Heart right ventricle (tissue), 16 donors: ENCODE measurements at regions of chr12 and their contacts with region 1.

Region 1: DNA sequence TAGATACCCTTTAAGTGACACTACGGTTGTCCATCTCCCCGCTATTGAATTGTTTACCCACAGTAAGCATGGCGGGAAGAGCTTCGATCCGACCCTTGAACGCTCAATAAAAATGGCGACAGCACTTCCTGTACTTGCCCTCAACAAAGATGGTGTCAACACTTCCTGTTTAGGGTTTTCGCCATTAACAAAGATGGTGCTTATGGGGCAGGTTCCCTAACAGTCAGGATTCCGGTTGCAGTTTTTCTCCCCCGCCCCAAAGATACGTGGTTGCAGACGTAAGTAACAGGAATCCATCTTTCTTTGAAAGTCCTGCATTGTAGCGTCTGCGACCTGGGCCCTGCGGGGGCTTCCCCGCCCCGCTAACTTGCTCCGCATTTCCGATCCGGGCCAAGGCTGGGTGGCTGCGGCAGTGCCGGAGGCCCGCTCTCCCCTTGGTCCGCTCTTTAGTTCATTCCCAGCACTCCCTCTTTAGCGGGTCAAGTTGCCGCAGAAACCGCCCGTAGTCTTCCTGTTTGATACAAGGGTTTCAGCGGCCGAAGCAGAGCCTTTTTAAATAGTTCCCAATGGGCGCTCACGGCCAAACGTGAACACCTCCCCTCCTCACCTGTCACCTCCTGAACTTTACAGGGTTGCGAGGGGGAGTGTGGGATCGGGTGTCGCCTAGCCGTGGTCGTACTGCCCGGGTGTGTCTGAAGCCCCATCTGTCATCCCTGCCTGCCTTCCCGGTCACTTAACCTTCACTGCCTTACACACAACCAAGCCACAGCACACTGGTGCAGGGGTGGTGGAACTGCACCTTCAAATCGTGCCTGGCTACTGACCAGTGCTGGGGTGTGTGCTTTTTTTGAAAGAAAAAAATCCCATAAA is at the start of gene CRADD:
- DNase-seq: peak; percentile 67 to 93
- ATAC-seq: peak; percentile 91 to 97 (median 94)
- H3K4me3 ChIP-seq: peak within 1 kb of the TSS; percentile 48 to 80 (median 66)
- H3K27ac ChIP-seq: peak within 1 kb of the TSS; percentile 86 to 99 (median 98)
- H3K4me1 ChIP-seq: peaks cover 0 to 51% (median 27%) of the 10 kb centered on the region in 9 donors
- H3K27me3 ChIP-seq: no peaks in the 10 kb centered on the region
- CTCF ChIP-seq: no peak
- total RNA-seq, gene CRADD: 36.3 to 80.1 (median 60.2) TPM

Region 2: DNA sequence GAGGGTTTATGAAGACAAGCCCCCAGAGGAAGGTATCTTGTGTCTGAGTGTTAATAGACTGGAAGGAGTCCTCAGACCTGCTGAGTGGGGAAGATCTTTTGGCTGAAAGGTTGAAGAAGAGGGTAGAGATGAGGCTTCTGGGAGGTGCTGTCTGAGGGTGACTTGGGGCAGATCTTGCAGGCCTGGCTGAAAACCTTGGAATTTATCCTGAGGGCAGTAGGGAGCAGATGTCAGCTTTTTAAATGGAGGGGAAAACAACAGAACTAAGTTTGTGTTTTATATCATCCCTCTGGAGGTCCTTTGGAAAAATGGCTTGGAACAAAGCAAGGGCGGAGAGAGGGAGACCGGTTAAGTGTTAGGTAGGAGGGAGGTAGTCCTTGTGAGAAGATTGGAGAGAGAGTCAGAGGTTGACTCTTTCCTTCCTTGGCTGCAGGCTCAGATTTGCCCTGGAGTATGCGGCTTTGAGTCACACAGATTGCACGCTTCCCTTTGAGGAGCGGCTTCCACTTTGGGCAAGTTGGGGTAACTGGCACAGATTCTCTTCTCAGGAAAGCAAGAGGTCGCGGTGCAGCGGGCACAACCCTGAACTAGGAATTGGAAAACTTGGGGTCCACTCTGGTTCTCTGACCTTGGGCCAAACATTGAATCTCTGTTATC is 95.2 kb before region 1 on chr12:
- intact Hi-C with region 1: loop called in 2 of 10 experiments (anchors 5 to 10 kb)
- DNase-seq: no peak
- ATAC-seq: no peak
- H3K4me3 ChIP-seq: no peak overlapping the region
- H3K27ac ChIP-seq: no peak overlapping the region
- H3K4me1 ChIP-seq: peaks cover 0 to 38% (median 28%) of the 10 kb centered on the region in 9 donors
- H3K27me3 ChIP-seq: no peaks in the 10 kb centered on the region
- CTCF ChIP-seq: no peak

Region 3: GRCh38 chr12:93733358-93733757 is 55.9 kb after region 1 on chr12:
- intact Hi-C with region 1: loop called in 2 of 10 experiments (anchors 5 kb)
- DNase-seq: peak; percentile 14 to 31
- ATAC-seq: peak; percentile 42 to 83 (median 62)
- H3K4me3 ChIP-seq: no peak overlapping the region
- H3K27ac ChIP-seq: no peak overlapping the region
- H3K4me1 ChIP-seq: peaks cover 0 to 26% (median 17%) of the 10 kb centered on the region in 9 donors
- H3K27me3 ChIP-seq: no peaks in the 10 kb centered on the region
- CTCF ChIP-seq: no peak

Region 4: DNA sequence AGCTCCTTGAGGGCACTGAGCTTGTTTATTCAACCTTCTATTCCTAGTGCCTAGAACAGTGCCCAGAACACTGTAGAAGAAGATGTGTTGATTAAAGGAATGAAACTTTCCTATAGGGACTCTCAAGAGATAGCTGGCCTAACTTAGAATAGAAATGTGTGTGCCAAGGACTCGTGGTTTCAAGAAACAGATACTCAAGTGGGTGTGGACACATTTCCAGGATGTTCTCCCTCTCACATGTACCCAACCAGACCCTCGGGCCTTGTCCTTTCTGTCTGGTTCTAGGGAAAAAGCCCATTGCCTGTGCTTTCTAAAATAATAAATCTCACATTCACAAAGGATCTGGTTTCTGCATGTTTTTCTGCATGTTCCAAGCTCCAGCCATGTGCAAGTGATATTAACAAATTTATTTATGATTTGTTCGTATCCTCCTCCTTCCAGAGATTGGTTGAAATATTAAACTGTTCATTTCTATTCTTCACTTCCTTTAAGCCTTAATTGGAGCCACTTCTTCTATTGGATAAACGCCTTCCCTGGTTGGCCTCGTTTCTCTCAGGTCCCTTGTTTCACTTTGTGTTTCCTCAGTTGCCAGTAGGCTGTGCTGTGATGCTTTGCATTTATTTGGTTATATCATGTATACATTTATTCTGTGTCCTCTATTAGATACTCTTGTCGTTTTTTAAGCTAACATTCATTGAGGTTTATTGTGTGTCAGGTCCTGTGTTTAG is 89.5 kb after region 1 on chr12:
- intact Hi-C with region 1: loop called in 1 of 10 experiments (anchors 5 kb)
- DNase-seq: peak in 1 of 2 donors; percentile 69
- ATAC-seq: peak; percentile 71 to 91 (median 87)
- H3K4me3 ChIP-seq: no peak overlapping the region
- H3K27ac ChIP-seq: peak overlapping the region; percentile 5 to 77 (median 63)
- H3K4me1 ChIP-seq: peaks cover 7 to 69% (median 41%) of the 10 kb centered on the region in 9 donors
- H3K27me3 ChIP-seq: no peaks in the 10 kb centered on the region
- CTCF ChIP-seq: peak; percentile 30 to 83 (median 68)

Region 5: DNA sequence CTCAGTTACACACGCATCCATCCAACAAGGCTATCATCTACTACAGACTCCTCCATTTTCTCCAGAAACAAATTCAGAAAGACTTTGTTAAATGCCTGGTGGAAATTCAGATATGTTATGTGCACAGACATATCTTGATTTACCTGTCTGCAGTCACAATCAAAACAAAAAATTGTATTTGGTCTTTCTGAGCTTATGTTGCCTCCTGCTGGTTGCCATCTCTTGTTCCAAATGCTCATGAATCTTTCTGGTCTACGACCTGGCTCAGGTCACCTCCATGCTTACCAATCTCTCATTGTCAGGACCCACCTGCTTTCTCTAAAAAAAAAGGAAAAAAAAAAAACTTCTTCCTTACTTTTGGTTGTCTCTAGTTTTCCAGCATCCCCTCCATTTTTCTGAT is 301.8 kb after region 1 on chr12:
- intact Hi-C with region 1: loop called in 2 of 10 experiments (anchors 5 to 10 kb)
- DNase-seq: peak in 1 of 2 donors; percentile 19
- ATAC-seq: peak in 3 of 8 donors; percentile 49 to 57 (median 54)
- H3K4me3 ChIP-seq: no peak overlapping the region
- H3K27ac ChIP-seq: no peak overlapping the region
- H3K4me1 ChIP-seq: peaks cover 0 to 21% (median 3%) of the 10 kb centered on the region in 9 donors
- H3K27me3 ChIP-seq: no peaks in the 10 kb centered on the region
- CTCF ChIP-seq: peak in 8 of 9 donors; percentile 29 to 76 (median 58)

Region 6: DNA sequence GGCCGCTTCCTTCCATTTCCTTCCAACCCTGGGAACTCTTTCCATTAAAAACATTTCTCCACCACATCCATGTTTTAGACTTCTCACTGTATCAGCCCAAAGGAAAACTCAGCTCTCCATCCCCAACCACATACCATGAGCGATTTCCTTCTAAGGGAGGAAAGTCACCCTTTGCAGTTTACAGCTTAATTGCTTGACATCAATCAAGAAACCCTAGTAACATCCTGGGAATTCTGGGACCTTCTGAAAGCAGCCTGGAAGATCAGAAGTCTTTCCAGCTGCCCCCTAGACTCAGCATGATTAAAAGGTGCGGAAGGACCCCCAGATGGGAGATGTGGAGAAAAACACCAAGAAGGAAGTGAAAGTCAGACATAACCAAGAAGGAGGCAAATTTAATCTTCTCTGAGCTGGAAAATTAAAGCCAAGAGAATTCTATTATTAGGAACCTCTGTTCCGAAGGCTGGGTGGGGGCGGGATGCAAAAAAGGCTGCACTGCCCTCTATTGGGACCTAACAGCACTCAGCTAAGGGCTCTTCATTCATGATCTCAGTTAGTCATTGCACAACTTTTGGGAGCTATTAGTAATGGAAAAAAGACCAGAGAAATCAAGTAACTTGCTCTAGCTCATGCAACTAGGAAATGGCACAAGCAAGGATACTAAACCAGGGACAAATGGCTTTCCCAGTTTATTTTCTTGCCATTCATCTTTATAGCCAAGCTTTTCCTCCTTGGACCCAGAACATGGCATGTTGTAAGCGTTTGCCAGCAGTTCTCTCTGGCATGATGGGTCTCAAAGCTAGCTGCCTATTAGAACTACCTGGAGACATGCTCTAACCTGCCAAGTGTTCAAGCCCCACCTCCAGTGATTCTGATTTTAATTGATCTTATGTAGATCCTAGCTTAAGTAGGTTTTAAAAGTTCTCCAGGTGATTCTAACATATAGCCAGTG is 397.8 kb after region 1 on chr12:
- intact Hi-C with region 1: loop called in 2 of 10 experiments (anchors 10 kb)
- DNase-seq: peak; percentile 57 to 73
- ATAC-seq: peak; percentile 81 to 94 (median 90)
- H3K4me3 ChIP-seq: peak overlapping the region in 4 of 10 donors; percentile 3 to 25 (median 14)
- H3K27ac ChIP-seq: peak overlapping the region; percentile 68 to 94 (median 89)
- H3K4me1 ChIP-seq: peaks cover 8 to 33% (median 21%) of the 10 kb centered on the region in 9 donors
- H3K27me3 ChIP-seq: no peaks in the 10 kb centered on the region
- CTCF ChIP-seq: peak; percentile 48 to 84 (median 73)